ENCODE measurements at regions of chr15 and their contacts with region 1.

Region 1: DNA sequence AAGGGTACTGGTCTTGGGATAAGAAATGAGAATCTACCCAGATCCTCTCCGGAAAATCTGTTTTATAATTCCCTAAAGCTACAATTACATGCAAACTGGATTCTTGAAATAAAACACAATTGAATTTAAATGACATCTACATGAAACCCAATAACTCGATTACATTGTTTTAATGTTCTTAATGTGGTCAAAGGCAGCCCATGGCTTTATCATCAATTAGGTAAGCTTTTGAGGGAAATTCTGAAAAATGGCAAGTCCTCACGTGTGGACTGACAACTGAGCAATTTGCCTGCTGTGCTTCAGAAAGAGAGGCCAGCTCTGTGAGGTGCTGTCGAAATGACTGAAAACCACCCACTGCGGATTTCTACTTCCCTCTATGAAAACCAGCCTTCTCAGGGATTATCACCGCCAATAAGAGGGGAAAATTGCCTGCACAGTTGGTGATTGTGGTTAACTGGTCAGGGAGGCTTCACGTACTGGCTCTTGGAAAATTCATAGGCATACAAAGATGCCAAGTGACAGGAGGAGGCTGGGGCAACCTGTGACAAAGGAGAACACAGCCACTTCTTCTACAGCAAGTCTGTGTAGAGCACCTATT is 200.8 kb upstream of the SLCO3A1 start:
- DNase-seq: no peak
- ATAC-seq: no peak
- H3K4me3 ChIP-seq: no peak overlapping the region
- H3K4me3 Mint-ChIP-seq: no peak overlapping the region
- H3K27ac ChIP-seq: no peak overlapping the region
- H3K27ac Mint-ChIP-seq: no peak overlapping the region
- H3K4me1 ChIP-seq: no peaks in the 10 kb centered on the region
- H3K4me1 Mint-ChIP-seq: peaks cover 9% of the 10 kb centered on the region
- H3K27me3 ChIP-seq: peaks cover 3 to 26% of the 10 kb centered on the region in 2 experiments
- H3K27me3 Mint-ChIP-seq: peaks cover 47% of the 10 kb centered on the region
- CTCF ChIP-seq: no peak

Region 2: GRCh38 chr15:91589356-91589755 is 63.4 kb before region 1 on chr15:
- CTCF ChIA-PET with region 1: no interaction called
- POLR2A ChIA-PET with region 1: no interaction called
- intact Hi-C with region 1: no loop called
- DNase-seq: peak in 2 of 14 experiments; percentile 2 to 20
- ATAC-seq: no peak
- H3K4me3 ChIP-seq: no peak overlapping the region
- H3K4me3 Mint-ChIP-seq: no peak overlapping the region
- H3K27ac ChIP-seq: no peak overlapping the region
- H3K27ac Mint-ChIP-seq: no peak overlapping the region
- H3K4me1 ChIP-seq: no peaks in the 10 kb centered on the region
- H3K4me1 Mint-ChIP-seq: no peaks in the 10 kb centered on the region
- H3K27me3 ChIP-seq: no peaks in the 10 kb centered on the region
- H3K27me3 Mint-ChIP-seq: peaks cover 8% of the 10 kb centered on the region
- CTCF ChIP-seq: no peak

Region 3: GRCh38 chr15:91752081-91752785 is 99.5 kb after region 1 on chr15:
- CTCF ChIA-PET with region 1: no interaction called
- POLR2A ChIA-PET with region 1: no interaction called
- intact Hi-C with region 1: loop called in 1 of 2 experiments (anchors 10 kb)
- DNase-seq: no peak
- ATAC-seq: no peak
- H3K4me3 ChIP-seq: no peak overlapping the region
- H3K4me3 Mint-ChIP-seq: no peak overlapping the region
- H3K27ac ChIP-seq: no peak overlapping the region
- H3K27ac Mint-ChIP-seq: no peak overlapping the region
- H3K4me1 ChIP-seq: no peaks in the 10 kb centered on the region
- H3K4me1 Mint-ChIP-seq: no peaks in the 10 kb centered on the region
- H3K27me3 ChIP-seq: no peaks in the 10 kb centered on the region
- H3K27me3 Mint-ChIP-seq: peaks cover 11% of the 10 kb centered on the region
- CTCF ChIP-seq: no peak

Measured in CD4-positive, alpha-beta T cell (primary cell).